ENCODE measurements at regions of chr12 and their contacts with region 1.

Region 1: DNA sequence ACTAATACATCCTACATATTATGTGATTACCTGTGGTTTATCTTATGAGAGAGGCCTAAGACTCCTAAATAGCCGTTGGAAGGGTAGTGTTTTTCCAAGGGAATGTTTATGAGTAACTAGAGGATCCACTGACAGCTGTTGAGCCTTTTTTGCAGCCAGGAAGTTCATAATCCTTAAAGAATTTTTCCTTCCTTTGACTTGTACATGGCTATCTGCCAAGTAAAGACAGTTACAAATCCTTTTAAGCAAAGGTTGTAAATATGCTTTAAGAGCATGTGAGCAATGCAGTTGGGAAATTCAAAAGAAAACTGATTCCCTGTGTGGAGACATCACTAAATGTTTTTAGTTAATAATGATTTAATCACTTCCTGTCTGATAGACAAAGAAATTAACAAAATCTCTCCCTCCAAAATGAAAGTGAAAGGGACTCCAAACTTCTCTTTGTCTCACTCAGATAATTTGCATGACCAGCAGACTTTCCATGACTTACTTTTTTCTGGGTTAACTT is 333.8 kb downstream of the PDZRN4 start:
- DNase-seq: no peak
- H3K4me3 Mint-ChIP-seq: no peak overlapping the region
- H3K27ac Mint-ChIP-seq: no peak overlapping the region
- H3K4me1 Mint-ChIP-seq: peaks cover 5% of the 10 kb centered on the region
- H3K27me3 Mint-ChIP-seq: no peaks in the 10 kb centered on the region

Region 2: GRCh38 chr12:41536813-41537490 is 15.0 kb after region 1 on chr12:
- intact Hi-C with region 1: loop called (anchors 2 kb)
- DNase-seq: no peak
- H3K4me3 Mint-ChIP-seq: no peak overlapping the region
- H3K27ac Mint-ChIP-seq: peak overlapping the region; percentile 79
- H3K4me1 Mint-ChIP-seq: peaks cover 15% of the 10 kb centered on the region
- H3K27me3 Mint-ChIP-seq: peaks cover 2% of the 10 kb centered on the region